ENCODE measurements at regions of chr3 and their contacts with region 1.

Region 1: DNA sequence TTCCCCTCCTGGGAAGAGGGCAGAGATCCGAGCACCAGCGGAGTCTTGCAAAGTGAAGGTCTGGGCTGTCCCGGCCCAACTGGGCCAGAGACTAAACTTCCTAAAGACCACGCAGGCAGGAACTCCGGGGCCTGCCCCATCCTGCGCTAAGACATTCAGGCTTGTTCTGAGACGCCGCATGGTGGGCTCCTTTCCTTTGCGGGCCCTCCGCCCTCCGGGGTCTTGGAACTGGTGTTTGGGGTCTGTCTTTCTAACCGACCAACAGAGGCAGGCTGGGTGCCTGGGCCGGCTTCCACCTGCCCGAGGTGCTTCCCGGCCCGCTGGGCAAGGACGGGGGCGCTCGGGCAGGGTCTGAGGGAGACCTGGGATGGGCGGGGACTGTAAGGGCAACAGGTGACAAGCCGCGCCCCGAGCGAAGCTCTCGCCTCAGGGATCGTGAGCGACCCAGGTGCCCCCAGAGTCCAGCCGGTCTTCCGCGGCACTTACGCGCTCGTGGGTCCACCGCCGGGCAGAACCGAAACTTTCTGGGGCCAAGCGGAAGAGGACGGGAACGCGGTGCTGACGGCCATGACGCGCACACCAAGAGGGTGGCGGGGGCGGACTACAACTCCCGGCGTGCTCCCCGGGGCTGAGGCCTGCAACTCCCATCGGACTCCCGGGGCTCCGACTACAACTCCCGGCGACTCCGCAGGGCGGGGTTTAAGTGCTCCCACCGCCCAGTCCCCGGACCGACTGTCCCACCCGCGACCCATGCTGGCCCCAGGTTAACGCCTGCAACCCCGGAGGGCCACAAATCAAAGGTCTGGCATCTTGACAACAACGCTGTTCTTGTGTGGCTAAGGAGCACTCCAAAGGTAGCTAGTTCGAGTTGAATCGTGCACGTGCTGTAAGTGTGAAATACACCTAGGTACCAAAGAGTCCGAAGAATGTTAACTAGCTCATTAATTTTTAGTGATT is at the start of gene FYCO1:
- DNase-seq: peak; percentile 84 to 88 (median 85)
- H3K4me3 ChIP-seq: peak within 1 kb of the TSS; percentile 75 to 93
- H3K4me3 Mint-ChIP-seq: peak within 1 kb of the TSS; percentile 83 to 95 (median 92)
- H3K27ac ChIP-seq: peak within 1 kb of the TSS; percentile 95
- H3K27ac Mint-ChIP-seq: peak within 1 kb of the TSS; percentile 88 to 95 (median 94)
- H3K4me1 ChIP-seq: peaks cover 47% of the 10 kb centered on the region
- H3K4me1 Mint-ChIP-seq: peaks cover 32 to 59% (median 37%) of the 10 kb centered on the region in 4 donors
- H3K27me3 ChIP-seq: no peaks in the 10 kb centered on the region
- H3K27me3 Mint-ChIP-seq: no peaks in the 10 kb centered on the region
- total RNA-seq, gene FYCO1: 42.5 to 43.3 TPM

Region 2: GRCh38 chr3:45958321-45958791 is 37.2 kb before region 1 on chr3:
- CTCF ChIA-PET with region 1: no interaction called
- POLR2A ChIA-PET with region 1: interaction called, 195 read pairs
- intact Hi-C with region 1: no loop called
- DNase-seq: no peak
- H3K4me3 ChIP-seq: no peak overlapping the region
- H3K4me3 Mint-ChIP-seq: peak overlapping the region in 1 of 8 donors; percentile 25
- H3K27ac ChIP-seq: peak overlapping the region; percentile 4
- H3K27ac Mint-ChIP-seq: peak overlapping the region in 4 of 7 donors; percentile 3 to 66 (median 26)
- H3K4me1 ChIP-seq: peaks cover 25% of the 10 kb centered on the region
- H3K4me1 Mint-ChIP-seq: peaks cover 8 to 55% (median 33%) of the 10 kb centered on the region in 4 donors
- H3K27me3 ChIP-seq: no peaks in the 10 kb centered on the region
- H3K27me3 Mint-ChIP-seq: no peaks in the 10 kb centered on the region

Region 3: DNA sequence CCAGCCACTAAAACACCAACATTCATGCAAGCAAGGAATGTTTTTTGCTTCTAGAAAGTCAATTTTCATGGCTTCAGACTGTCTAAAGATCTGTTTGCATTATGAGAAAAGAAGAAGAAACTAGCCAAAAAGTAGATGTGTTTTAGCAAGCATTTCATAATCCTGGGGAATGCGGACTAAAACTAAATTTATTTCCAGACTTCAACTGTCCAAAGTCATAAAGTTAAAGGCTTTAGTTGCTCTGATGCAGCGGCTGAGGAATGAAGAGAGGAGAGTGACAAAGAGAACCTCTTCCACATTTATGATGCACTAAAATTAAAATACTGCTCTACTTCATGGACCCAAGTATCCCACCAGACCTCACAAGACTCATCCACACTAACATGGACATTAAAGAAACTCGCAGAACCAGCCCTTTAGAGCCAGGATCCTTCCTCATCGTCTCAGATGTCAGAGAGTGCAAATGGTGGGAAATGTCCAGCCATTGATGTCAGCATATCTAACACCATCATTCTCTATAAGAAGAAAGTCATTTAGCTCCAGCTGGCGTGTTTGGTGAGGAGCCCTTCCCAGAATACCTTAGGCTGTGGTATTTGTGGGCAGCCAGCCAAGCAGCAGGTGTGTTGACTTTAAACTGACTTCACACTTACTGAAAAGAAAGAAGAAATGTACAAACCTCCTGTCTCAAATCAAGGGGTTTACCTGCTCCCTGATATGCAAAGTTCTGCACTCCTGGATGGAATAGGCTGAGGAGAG is 17.3 kb before region 1 on chr3:
- CTCF ChIA-PET with region 1: interaction called, 20 read pairs
- POLR2A ChIA-PET with region 1: interaction called, 90 read pairs
- intact Hi-C with region 1: loop called (anchors 1 kb)
- DNase-seq: peak; percentile 38 to 73 (median 48)
- H3K4me3 ChIP-seq: peak overlapping the region in 1 of 2 donors; percentile 2
- H3K4me3 Mint-ChIP-seq: peak overlapping the region in 7 of 8 donors; percentile 38 to 93 (median 79)
- H3K27ac ChIP-seq: peak overlapping the region; percentile 10
- H3K27ac Mint-ChIP-seq: peak overlapping the region; percentile 31 to 99 (median 90)
- H3K4me1 ChIP-seq: peaks cover 91% of the 10 kb centered on the region
- H3K4me1 Mint-ChIP-seq: peaks cover 50 to 96% (median 74%) of the 10 kb centered on the region in 4 donors
- H3K27me3 ChIP-seq: no peaks in the 10 kb centered on the region
- H3K27me3 Mint-ChIP-seq: no peaks in the 10 kb centered on the region

Region 4: GRCh38 chr3:46065294-46065721 is 69.8 kb after region 1 on chr3:
- CTCF ChIA-PET with region 1: interaction called, 4 read pairs
- POLR2A ChIA-PET with region 1: interaction called, 66 read pairs
- intact Hi-C with region 1: loop called (anchors 1 kb)
- DNase-seq: peak; percentile 88 to 99 (median 93)
- H3K4me3 ChIP-seq: no peak overlapping the region
- H3K4me3 Mint-ChIP-seq: peak overlapping the region; percentile 58 to 86 (median 78)
- H3K27ac ChIP-seq: peak overlapping the region; percentile 47
- H3K27ac Mint-ChIP-seq: peak overlapping the region; percentile 86 to 96 (median 94)
- H3K4me1 ChIP-seq: peaks cover 77% of the 10 kb centered on the region
- H3K4me1 Mint-ChIP-seq: peaks cover 52 to 88% (median 68%) of the 10 kb centered on the region in 4 donors
- H3K27me3 ChIP-seq: no peaks in the 10 kb centered on the region
- H3K27me3 Mint-ChIP-seq: no peaks in the 10 kb centered on the region